Activated T-helper 2 cell treated with anti-CD3 and anti-CD28 coated beads, Interferon-gamma antibody, Interleukin-2, Interleukin-4, amounts not matched to agents 10 μg/mL and 5 μg/mL and 100 μg/mL, durations not matched to agents 14 hours and 24 hours and 36 hours (primary cell): ENCODE measurements at regions of chr2 and their contacts with region 1.

Region 1: GRCh38 chr2:197434541-197435513 is at the start of gene SF3B1:
- DNase-seq: peak; percentile 99
- H3K4me3 Mint-ChIP-seq: peak within 1 kb of the TSS; percentile 89
- H3K27ac Mint-ChIP-seq: peak within 1 kb of the TSS; percentile 100
- H3K4me1 Mint-ChIP-seq: peaks cover 42% of the 10 kb centered on the region
- H3K27me3 Mint-ChIP-seq: no peaks in the 10 kb centered on the region
- total RNA-seq, gene SF3B1: 284 and 289 TPM in 2 replicates

Region 2: DNA sequence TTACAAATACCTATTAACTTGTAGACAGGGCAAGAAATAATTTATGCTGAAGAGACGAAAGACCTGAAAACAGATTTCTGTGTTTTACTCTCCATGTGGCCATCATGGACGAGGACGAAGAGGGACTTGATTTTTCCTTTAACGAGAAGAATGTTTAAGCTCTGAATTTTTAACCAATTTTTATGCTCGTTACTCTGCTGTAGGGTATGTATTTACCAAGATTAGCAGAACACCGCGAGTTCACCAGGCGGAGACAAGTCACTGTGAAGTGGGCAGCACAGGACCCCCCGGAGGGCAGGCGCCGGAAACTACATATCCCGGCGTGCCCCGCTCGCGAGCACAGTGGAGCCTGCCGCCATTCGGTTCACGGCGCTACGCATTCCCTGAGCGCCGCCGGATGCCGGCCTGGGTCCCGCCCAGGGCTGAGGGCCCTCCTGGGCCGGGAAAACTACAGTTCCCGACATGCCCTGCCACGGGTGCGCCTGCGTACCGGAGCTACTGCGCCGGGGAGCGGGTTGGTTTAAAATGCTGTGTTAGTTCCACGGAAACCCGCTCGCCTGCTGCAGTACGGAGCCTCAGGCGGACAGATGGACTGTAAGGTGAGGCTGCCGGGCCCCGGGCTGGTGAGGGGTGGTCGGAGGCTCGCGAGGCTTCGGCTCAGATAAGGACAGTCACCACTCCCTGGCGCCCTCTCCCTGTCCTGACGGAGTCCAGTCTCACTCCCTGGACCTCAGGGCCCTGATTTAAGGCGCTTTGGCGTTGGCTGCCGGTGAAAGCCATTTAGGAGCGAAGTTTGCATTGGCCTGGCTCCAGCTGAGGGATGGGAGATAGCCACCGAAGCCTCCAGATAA is 795.4 kb before region 1 on chr2 and contains the start of gene CCDC150:
- intact Hi-C with region 1: loop called (anchors 10 kb)
- DNase-seq: peak; percentile 93
- H3K4me3 Mint-ChIP-seq: peak within 1 kb of the TSS; percentile 90
- H3K27ac Mint-ChIP-seq: peak within 1 kb of the TSS; percentile 65
- H3K4me1 Mint-ChIP-seq: peaks cover 24% of the 10 kb centered on the region
- H3K27me3 Mint-ChIP-seq: peaks cover 11% of the 10 kb centered on the region
- total RNA-seq, gene CCDC150: 13.6 and 17.8 TPM in 2 replicates

Region 3: GRCh38 chr2:197137231-197137630 is 297.6 kb before region 1 on chr2:
- intact Hi-C with region 1: loop called (anchors 5 kb)
- DNase-seq: no peak
- H3K4me3 Mint-ChIP-seq: peak overlapping the region; percentile 13
- H3K27ac Mint-ChIP-seq: peak overlapping the region; percentile 68
- H3K4me1 Mint-ChIP-seq: peaks cover 82% of the 10 kb centered on the region
- H3K27me3 Mint-ChIP-seq: no peaks in the 10 kb centered on the region

Region 4: DNA sequence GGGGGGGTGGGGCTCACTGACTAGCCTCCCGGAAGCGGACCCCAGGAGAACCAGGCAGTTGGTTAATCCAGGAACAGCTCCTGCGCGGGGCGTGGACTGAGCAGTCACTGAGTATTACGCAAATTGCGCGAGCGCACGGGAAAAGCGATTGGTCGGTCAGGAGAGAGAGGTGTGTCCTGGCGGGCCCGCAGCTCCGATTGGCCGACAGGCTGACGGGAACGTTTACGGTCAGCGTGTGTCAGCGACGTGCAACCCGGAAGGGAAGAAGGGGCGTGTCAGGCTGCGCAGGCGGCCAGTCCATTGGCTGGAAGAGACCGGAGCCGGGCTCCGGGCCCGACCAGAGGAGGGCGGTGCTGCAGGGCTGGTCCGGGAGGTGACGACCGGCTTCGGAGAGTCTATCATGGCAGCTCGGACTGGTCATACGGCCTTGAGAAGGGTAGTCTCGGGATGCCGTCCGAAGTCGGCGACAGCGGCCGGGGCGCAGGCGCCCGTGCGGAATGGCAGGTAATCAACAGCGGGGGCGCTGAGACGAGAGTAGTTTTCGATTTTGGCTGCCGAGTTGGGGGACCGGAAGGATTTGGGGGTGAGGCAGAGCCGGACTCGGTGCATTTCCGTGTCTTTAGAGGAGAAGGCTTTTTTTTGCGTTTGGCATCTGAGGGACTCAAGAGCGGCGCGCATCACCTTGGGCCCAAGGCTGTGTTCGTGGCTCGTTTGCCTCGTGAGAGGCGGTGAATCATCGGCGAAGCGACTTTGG is 18.5 kb after region 1 on chr2 and contains the start of gene COQ10B:
- intact Hi-C with region 1: loop called (anchors 1 kb)
- DNase-seq: peak; percentile 99
- H3K4me3 Mint-ChIP-seq: peak within 1 kb of the TSS; percentile 99
- H3K27ac Mint-ChIP-seq: peak within 1 kb of the TSS; percentile 100
- H3K4me1 Mint-ChIP-seq: peaks cover 26% of the 10 kb centered on the region
- H3K27me3 Mint-ChIP-seq: no peaks in the 10 kb centered on the region
- total RNA-seq, gene COQ10B: 19.9 and 20.8 TPM in 2 replicates

Region 5: GRCh38 chr2:197515739-197516392 is 81.0 kb after region 1 on chr2 and contains the start of gene MOB4:
- intact Hi-C with region 1: loop called (anchors 1 kb)
- DNase-seq: peak; percentile 94
- H3K4me3 Mint-ChIP-seq: peak within 1 kb of the TSS; percentile 99
- H3K27ac Mint-ChIP-seq: peak within 1 kb of the TSS; percentile 84
- H3K4me1 Mint-ChIP-seq: peaks cover 19% of the 10 kb centered on the region
- H3K27me3 Mint-ChIP-seq: no peaks in the 10 kb centered on the region
- total RNA-seq, gene MOB4: 18.1 and 19.5 TPM in 2 replicates

Region 6: DNA sequence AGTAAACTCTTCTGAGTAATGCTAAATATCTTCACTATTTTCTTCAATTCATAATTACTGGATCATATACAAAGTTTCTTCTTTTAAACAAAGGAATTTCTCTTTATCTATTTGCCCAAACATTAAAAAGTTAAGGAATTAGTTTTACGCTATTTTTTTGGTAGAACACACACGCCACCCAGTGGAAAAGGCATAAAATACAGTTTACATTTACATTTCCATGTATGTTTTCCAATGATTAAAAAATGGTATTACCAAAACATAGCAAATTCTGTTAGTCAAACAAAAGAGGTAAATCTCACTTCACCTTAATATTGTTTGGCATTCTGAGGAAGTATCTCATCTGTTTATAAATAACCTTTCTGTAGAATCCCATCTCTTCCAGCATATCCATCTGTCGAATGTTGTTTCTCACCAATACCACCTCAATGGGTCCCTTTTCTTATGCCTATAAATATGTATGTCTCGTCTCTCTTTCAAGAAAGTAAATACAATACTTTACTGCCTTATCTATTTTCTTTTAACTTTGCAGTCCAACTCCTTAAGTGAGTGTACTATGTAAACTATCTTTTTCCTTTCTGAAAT is 343.1 kb after region 1 on chr2:
- intact Hi-C with region 1: loop called (anchors 5 kb)
- DNase-seq: no peak
- H3K4me3 Mint-ChIP-seq: no peak overlapping the region
- H3K27ac Mint-ChIP-seq: no peak overlapping the region
- H3K4me1 Mint-ChIP-seq: peaks cover 4% of the 10 kb centered on the region
- H3K27me3 Mint-ChIP-seq: peaks cover 17% of the 10 kb centered on the region